ENCODE measurements at regions of chr3 and their contacts with region 1.

Region 1: GRCh38 chr3:46496741-46497554 is 828 bp upstream of the RTP3 start:
- DNase-seq: no peak
- ATAC-seq: no peak

Region 2: DNA sequence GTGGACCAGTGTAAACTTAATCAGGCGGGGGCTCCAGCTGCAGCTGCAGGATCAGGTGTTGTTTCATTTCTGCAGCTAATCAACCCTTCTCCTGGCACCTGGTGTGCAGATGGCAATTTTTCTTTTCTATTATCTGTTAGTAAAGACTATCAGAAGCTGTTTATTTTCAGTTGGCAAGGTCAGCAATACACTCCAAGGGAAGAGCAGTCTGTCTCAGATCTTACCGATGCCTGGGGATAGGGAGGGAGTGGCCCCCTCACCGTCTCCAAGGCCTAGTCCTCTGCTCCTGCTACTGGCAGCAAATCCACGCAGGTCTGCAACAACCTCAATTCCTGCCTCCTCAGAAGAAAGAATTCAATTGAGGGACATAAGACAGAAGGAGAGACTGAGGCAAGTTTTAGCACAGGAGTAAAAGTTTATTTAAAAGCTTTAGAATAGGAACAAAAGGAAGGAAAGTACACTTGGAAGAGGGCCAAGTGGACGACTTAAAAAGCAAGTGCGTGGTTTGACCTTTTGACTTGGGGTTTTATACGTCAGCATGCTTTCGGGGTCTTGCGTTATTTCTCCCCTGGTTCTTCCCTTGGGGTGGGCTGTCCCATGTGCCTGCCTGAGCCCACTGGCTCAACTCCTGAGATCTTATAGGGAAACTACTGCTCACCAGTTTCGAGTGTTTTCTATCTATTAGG is 80.7 kb before region 1 on chr3:
- intact Hi-C with region 1: no loop called
- DNase-seq: no peak
- ATAC-seq: no peak

Region 3: GRCh38 chr3:46629551-46630517 is 132.9 kb after region 1 on chr3:
- intact Hi-C with region 1: loop called (anchors 5 kb)
- DNase-seq: peak; percentile 88
- ATAC-seq: peak; percentile 95